AG04450 (cell line): ENCODE measurements at regions of chr13 and their contacts with region 1.

Region 1: GRCh38 chr13:27533155-27533643 is 82.8 kb upstream of the MTIF3 start:
- DNase-seq: peak; percentile 41
- H3K4me3 ChIP-seq: no peak overlapping the region
- H3K27ac ChIP-seq: no peak overlapping the region
- H3K27me3 ChIP-seq: no peaks in the 10 kb centered on the region
- CTCF ChIP-seq: peak; percentile 98

Region 2: GRCh38 chr13:27549406-27549981 is 16.3 kb after region 1 on chr13:
- CTCF ChIA-PET with region 1: interaction called, 22 read pairs
- POLR2A ChIA-PET with region 1: no interaction called
- DNase-seq: no peak
- H3K4me3 ChIP-seq: no peak overlapping the region
- H3K27ac ChIP-seq: no peak overlapping the region
- H3K27me3 ChIP-seq: no peaks in the 10 kb centered on the region
- CTCF ChIP-seq: no peak

Region 3: DNA sequence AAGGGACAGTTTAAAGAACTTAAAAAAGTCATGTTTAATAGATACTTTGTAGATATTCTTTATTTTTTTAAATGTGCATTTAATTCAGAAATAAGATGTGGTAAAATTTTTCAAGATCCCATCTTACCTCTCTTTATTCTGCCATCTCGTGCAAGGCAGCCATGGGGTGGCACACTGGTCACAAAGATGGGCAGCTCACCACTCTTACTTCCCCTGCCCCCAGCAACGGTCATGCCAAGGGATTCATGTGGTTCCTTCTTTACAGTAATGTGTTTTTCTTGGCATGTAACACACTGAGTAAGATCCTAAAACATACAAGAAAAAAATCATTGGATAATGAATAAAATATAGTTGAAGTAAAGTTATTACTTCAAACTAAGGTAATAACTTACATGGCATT is 22.9 kb after region 1 on chr13:
- CTCF ChIA-PET with region 1: interaction called, 13 read pairs
- POLR2A ChIA-PET with region 1: no interaction called
- DNase-seq: no peak
- H3K4me3 ChIP-seq: no peak overlapping the region
- H3K27ac ChIP-seq: no peak overlapping the region
- H3K27me3 ChIP-seq: no peaks in the 10 kb centered on the region
- CTCF ChIP-seq: peak; percentile 19; the same call in 1 of the 2 replicates

Region 4: DNA sequence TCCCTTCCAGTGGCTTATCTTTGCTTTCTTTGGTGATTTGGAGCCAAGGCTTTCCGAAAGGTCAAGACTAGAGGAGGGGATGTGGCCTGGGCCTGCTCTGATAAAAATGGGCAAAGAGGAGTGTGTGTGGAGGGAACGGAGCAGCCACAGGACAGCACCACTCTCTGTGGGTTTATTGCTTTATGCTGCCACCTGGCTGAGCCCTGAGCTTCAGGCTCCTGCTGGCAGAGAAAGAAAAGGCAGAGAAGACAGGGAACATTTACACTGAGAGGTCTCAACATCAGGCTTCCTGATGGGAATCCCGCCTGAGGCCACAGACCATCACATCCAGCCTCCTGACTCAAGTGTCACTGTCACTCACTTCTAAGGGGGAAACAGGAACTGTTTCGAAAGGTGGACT is 249.9 kb after region 1 on chr13:
- CTCF ChIA-PET with region 1: interaction called, 10 read pairs
- POLR2A ChIA-PET with region 1: no interaction called
- DNase-seq: no peak
- H3K4me3 ChIP-seq: no peak overlapping the region
- H3K27ac ChIP-seq: no peak overlapping the region
- H3K27me3 ChIP-seq: peaks cover 13% of the 10 kb centered on the region
- CTCF ChIP-seq: peak; percentile 59

Region 5: GRCh38 chr13:27988520-27988919 is 455.3 kb after region 1 on chr13 and contains the start of gene URAD:
- CTCF ChIA-PET with region 1: interaction called, 13 read pairs
- POLR2A ChIA-PET with region 1: no interaction called
- DNase-seq: no peak
- H3K4me3 ChIP-seq: no peak within 1 kb of the TSS
- H3K27ac ChIP-seq: no peak within 1 kb of the TSS
- H3K27me3 ChIP-seq: peaks cover 21% of the 10 kb centered on the region
- CTCF ChIP-seq: no peak
- polyA plus RNA-seq, gene URAD: not detected in 2 replicates